ENCODE measurements at regions of chr19 and their contacts with region 1.

Region 1: DNA sequence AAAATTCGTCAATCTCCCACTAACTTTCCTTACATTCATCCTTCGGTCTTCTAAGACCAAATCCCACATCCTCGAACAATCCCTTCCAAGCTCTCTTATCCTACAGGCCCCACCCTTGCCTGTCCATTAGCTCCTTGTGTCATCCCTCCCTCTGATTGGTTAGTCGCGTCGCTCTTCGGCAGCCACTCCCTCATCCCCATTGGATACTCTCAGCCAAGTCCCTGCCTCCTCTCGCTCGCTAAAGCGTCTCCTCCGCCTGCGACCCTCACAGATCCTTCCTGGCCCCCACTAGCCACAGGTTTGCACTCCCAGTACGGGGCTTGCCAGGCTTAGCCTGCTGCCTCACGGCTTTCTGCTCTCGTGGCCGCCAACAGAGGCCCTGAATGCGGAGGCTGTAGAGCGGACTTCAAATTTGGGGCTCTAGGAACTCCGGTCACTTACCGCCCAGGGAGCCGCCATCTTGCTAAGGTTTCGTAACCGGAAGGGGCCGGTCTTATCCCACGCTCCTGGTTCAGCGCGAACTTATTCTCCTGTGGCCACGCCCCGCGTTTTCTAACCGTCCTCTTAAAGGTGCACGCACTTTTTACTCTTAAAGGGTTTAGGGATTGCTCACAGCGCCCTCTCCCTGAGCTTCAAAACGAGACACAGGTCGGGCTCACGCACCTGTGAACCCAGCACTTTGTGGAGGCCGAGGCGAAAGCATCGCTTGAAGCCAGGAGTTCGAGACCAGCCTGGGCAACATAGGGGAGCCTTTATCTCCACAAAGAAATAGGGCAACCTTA is at the start of gene DMAC2:
- DNase-seq: peak; percentile 98
- ATAC-seq: peak; percentile 97
- H3K4me3 Mint-ChIP-seq: no peak within 1 kb of the TSS
- H3K27ac Mint-ChIP-seq: peak within 1 kb of the TSS; percentile 2
- H3K4me1 Mint-ChIP-seq: peaks cover 18% of the 10 kb centered on the region
- H3K27me3 Mint-ChIP-seq: peaks cover 2% of the 10 kb centered on the region
- total RNA-seq, gene DMAC2: 52.5 to 66.3 TPM

Region 2: DNA sequence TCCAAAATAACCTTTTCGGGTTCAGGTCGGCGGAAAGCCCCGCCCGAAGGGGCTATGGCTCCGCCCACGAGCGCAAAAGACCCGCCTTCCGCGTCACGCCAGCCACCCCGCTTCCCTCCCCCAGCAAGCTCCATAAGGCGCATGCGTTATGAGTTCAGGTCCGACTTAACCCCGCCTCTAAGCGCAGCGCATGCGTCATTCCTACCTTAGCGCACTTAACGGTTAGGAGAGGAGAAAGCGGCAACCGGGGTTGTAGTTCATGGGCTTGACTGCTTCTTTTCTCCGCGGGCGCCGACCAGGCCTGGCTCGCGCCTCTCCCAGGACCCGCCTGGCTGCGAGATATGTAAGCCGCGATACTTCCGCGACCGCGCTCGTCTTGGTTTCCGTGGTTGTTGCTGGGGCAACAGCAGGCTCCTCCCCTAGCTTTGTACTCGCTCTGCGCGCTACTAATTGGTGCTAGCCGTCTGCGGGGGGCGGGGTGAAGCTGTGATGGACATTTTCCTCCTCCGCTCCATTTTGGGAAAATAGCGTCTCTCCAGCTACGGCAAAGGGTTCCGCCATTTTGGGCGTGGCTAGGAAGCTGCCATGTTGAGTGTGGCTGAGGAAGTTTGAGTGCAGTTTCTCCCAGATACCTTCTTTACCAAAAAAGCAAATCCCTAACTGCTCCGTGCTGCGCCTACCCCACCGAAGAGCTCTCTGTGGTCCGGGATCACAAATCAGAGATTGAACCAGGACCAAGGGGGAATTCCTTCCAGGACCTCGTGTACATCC is 75.7 kb before region 1 on chr19 and contains the start of gene B9D2:
- CTCF ChIA-PET with region 1: interaction called, 8 read pairs
- POLR2A ChIA-PET with region 1: interaction called, 6 read pairs
- intact Hi-C with region 1: loop called (anchors 1 kb)
- DNase-seq: peak; percentile 99
- ATAC-seq: peak; percentile 95
- H3K4me3 Mint-ChIP-seq: peak within 1 kb of the TSS; percentile 92
- H3K27ac Mint-ChIP-seq: peak within 1 kb of the TSS; percentile 98
- H3K4me1 Mint-ChIP-seq: peaks cover 29% of the 10 kb centered on the region
- H3K27me3 Mint-ChIP-seq: no peaks in the 10 kb centered on the region
- total RNA-seq, gene B9D2: 4.0 to 5.2 TPM

Region 3: DNA sequence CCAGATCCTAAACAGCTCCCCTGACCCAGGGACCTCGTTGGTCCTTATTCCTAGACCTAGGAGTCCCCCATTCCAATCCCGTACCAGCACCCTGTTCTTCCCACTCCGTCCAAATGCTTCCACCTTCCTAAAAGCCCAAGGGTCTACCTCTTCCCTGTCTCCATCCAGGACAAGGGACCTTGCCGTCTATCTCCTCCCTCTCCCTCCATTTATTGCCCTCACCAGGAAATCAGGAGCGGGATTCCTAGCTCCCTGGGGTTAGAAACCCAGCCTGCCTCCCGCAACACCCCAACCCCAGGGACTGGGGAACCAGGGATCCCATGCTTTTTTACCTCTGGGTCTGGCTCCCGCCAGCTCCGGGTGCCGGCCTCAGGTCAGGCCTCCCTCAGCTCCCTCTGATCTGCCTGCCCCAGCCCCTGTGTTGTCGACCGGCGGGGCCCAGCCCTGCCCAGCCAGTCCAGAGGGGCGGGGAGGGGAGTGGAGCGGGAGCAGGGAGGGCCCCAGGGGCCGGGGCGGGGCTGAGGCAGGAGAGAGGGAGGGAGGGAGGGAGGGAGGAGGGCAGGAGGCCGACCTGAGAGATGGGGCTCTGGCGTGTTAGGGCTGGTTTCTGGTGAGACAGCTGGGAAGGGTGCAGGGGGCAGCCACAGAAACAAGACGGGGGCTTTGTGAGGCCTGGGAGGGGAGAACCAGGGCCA is 12.5 kb before region 1 on chr19 and contains the start of gene B3GNT8:
- CTCF ChIA-PET with region 1: interaction called, 18 read pairs
- POLR2A ChIA-PET with region 1: interaction called, 8 read pairs
- intact Hi-C with region 1: no loop called
- DNase-seq: peak; percentile 73
- ATAC-seq: peak; percentile 72
- H3K4me3 Mint-ChIP-seq: peak within 1 kb of the TSS; percentile 65
- H3K27ac Mint-ChIP-seq: peak within 1 kb of the TSS; percentile 73
- H3K4me1 Mint-ChIP-seq: peaks cover 18% of the 10 kb centered on the region
- H3K27me3 Mint-ChIP-seq: no peaks in the 10 kb centered on the region
- total RNA-seq, gene B3GNT8: 0.41 TPM in 1 of 2 experiments, not detected in the other

Region 4: GRCh38 chr19:41531438-41532311 is 92.0 kb after region 1 on chr19:
- CTCF ChIA-PET with region 1: interaction called, 3 read pairs
- POLR2A ChIA-PET with region 1: interaction called, 6 read pairs
- intact Hi-C with region 1: loop called in 1 of 2 experiments (anchors 1 kb)
- DNase-seq: peak; percentile 91
- ATAC-seq: peak; percentile 85
- H3K4me3 Mint-ChIP-seq: peak overlapping the region; percentile 76
- H3K27ac Mint-ChIP-seq: peak overlapping the region; percentile 65
- H3K4me1 Mint-ChIP-seq: peaks cover 60% of the 10 kb centered on the region
- H3K27me3 Mint-ChIP-seq: no peaks in the 10 kb centered on the region

Region 5: DNA sequence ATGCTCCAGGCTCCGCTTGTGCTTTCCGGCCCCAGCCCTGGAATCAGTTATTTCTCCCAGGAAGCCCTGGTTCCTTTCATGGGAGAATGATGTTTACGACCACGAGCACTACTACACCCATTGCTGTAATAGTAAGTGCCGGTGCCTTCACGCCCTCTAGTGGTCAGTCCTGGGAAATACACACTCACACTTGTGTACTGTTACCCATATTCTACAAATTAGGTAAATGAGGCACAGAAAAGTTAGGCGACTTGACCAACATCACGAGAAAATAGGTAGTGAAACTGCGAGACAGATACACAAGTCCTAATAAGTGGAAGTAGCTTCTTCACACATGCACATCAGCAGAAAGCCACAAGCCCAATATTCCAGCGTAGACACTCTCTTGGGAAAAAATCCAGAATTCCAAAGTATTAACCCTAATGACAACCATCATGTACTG is 158.0 kb after region 1 on chr19:
- CTCF ChIA-PET with region 1: interaction called, 8 read pairs
- POLR2A ChIA-PET with region 1: no interaction called
- intact Hi-C with region 1: loop called in 1 of 2 experiments (anchors 2 kb)
- DNase-seq: peak; percentile 83
- ATAC-seq: peak; percentile 83
- H3K4me3 Mint-ChIP-seq: peak overlapping the region; percentile 4
- H3K27ac Mint-ChIP-seq: no peak overlapping the region
- H3K4me1 Mint-ChIP-seq: peaks cover 12% of the 10 kb centered on the region
- H3K27me3 Mint-ChIP-seq: peaks cover 5% of the 10 kb centered on the region

Measured in activated CD4-positive, alpha-beta T cell treated with anti-CD3 and anti-CD28 coated beads for 36 hours (primary cell).